ENCODE measurements at regions of chr9 and their contacts with region 1.

Region 1: GRCh38 chr9:94875300-94876020 is 149.0 kb downstream of the AOPEP start:
- DNase-seq: peak; percentile 16
- H3K4me3 ChIP-seq: no peak overlapping the region
- H3K27ac ChIP-seq: no peak overlapping the region
- H3K4me1 ChIP-seq: peaks cover 6% of the 10 kb centered on the region
- CTCF ChIP-seq: no peak

Region 2: DNA sequence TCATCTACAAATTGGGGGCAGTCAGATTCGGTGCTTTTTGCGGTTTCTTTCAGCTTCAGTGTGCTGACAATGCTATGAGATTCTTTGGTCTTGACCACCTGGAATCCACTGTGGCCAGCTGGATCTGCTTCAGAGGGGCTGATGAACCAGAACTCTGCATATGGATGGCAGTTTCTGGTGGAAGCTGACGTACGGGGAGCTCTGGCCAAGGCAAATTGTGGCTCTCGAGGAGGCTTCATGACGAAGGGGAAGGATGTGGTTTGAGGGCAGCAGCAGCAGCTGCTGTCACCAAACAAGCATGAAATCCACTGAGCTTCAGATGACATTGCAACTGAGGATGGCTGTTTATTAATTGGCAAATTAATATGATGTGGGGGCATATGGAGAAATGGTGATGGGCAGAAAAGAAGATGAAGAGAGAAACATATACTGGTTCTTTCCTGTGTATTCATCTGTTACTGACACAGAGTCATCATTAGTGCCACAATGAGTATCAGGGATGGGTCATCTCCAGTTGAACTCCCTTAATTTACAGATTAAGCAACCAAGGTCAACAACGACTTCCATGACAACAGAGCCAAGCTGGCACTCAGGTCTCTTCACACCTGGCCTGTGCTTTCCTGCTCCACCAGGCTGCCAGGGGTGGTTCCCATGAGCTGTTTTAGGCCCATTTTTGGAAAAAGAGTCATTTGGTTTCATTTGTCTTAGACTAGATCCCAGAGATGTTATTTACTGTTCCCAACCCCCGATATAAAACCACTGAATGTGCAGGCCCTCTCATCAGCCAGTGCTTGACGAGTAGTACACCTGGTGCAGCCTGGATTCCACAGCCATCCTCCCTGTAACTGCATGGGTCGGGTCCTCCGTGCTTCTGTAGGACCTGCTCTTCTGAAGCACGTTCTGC is 14.2 kb before region 1 on chr9:
- CTCF ChIA-PET with region 1: interaction called, 3 read pairs
- POLR2A ChIA-PET with region 1: interaction called, 4 read pairs
- intact Hi-C with region 1: loop called (anchors 1 kb)
- DNase-seq: peak; percentile 84
- H3K4me3 ChIP-seq: peak overlapping the region; percentile 15
- H3K27ac ChIP-seq: no peak overlapping the region
- H3K4me1 ChIP-seq: peaks cover 20% of the 10 kb centered on the region
- CTCF ChIP-seq: no peak

Region 3: DNA sequence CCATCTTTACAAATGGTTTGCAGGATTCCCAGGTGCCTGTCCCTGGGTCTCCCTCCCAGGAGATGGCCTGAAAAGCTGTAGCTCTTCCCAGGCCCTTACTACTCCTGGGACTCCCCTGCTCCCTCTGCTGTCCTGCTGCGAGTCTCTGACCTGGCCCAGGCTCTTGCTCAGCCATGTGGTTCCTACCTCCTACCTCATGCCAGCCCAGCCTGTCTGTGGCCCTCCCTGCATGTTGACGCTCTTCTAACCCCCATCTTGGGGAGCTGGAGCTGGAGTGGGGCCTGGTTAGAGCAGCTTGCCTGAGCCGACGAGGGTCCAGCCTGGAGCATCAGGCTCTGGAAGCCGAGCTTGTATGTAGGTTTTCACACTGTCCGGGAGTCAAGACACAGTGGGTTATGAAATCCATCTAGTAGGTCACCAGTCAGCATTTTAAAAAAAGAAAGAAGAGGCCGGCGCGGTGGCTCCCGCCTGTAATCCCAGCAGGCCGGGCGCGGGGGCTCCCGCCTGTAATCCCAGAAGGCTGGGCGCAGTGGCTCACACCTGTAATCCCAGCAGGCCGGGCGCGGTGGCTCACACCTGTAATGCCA is 197.7 kb after region 1 on chr9:
- CTCF ChIA-PET with region 1: no interaction called
- POLR2A ChIA-PET with region 1: no interaction called
- intact Hi-C with region 1: no loop called
- DNase-seq: no peak
- H3K4me3 ChIP-seq: no peak overlapping the region
- H3K27ac ChIP-seq: no peak overlapping the region
- H3K4me1 ChIP-seq: no peaks in the 10 kb centered on the region
- CTCF ChIP-seq: no peak

Measured in OCI-LY7 (cell line).